Endothelial cell of umbilical vein (primary cell): ENCODE measurements at regions of chr15 and their contacts with region 1.

Region 1: DNA sequence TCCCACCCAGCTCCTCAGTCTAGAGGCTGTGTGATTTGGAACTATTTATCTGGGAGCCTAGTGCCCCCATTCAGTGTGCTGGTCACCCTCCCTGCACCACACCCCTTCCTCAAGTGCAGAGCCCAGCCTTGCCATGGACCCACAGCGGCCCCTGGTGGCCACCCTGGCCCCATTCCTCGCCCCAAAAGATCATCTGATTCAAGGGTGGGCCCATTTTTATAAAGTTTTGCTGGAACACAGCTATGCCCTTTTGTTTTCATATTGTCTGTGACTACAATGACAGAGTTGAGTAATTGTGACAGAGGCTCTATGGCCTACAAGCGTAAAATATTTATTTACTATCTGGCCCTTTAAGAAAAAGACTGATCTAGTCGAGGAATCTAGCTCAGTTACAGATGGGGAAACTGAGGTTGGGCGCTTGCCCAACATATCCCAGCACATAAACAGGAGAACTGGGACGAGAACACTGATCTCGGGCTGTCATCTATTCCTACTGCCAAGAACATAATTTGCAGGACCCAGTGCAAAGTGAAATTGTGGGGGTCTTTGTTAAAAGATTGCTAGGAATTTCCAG is 1.8 kb downstream of the FES start:
- DNase-seq: peak; percentile 72
- H3K4me3 ChIP-seq: peak overlapping the region in 1 of 3 experiments; percentile 46
- H3K27ac ChIP-seq: peak overlapping the region; percentile 4
- H3K4me1 ChIP-seq: peaks cover 24% of the 10 kb centered on the region
- H3K27me3 ChIP-seq: no peaks in the 10 kb centered on the region
- CTCF ChIP-seq: peak; percentile 96 to 98
- POLR2A ChIP-seq: no peak

Region 2: DNA sequence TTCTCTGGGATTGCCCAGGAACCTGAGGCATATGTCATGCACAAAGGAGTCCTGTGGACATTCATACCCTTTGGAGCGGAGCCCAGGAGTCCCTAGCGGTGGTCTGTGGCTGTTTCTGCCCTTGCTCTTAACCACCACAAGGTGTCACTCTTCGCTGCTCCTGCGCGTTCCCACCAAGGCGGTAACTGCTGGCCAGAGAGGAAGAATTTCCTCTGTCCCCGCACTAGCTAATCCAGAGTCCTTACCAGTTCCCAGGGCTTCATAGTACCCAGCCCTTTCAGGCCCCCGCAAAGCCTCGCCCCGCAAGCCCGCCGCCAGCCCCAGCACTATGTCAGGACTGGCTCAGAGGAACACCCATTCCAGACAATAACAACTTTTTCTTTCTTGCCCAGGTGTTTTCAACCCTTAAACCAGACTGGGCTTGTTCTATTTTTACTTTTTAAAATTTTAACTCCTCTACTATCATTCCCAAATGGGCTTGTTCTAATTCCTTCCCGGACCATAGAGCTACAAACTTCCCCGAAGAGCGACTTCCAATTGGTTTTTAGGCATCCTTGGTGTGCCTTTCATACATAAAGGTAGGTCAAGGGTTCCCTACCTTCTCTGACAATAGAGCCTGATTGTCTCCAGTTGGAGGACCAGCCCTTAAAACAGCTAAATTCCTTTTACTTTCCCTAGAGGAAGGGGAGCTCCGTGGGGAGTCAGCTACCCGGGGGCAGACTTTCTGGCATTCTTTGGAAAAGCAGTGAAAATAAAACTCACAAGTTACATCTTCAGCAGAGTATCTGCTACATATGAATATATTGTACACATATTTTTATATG is 565.9 kb before region 1 on chr15:
- CTCF ChIA-PET with region 1: interaction called, 22 read pairs
- POLR2A ChIA-PET with region 1: no interaction called
- dilution Hi-C with region 1: no loop called
- intact Hi-C with region 1: loop called (anchors 1 kb)
- DNase-seq: peak; percentile 91
- H3K4me3 ChIP-seq: no peak overlapping the region
- H3K27ac ChIP-seq: no peak overlapping the region
- H3K4me1 ChIP-seq: peaks cover 3% of the 10 kb centered on the region
- H3K27me3 ChIP-seq: no peaks in the 10 kb centered on the region
- CTCF ChIP-seq: peak; percentile 97 to 98
- POLR2A ChIP-seq: no peak

Region 3: DNA sequence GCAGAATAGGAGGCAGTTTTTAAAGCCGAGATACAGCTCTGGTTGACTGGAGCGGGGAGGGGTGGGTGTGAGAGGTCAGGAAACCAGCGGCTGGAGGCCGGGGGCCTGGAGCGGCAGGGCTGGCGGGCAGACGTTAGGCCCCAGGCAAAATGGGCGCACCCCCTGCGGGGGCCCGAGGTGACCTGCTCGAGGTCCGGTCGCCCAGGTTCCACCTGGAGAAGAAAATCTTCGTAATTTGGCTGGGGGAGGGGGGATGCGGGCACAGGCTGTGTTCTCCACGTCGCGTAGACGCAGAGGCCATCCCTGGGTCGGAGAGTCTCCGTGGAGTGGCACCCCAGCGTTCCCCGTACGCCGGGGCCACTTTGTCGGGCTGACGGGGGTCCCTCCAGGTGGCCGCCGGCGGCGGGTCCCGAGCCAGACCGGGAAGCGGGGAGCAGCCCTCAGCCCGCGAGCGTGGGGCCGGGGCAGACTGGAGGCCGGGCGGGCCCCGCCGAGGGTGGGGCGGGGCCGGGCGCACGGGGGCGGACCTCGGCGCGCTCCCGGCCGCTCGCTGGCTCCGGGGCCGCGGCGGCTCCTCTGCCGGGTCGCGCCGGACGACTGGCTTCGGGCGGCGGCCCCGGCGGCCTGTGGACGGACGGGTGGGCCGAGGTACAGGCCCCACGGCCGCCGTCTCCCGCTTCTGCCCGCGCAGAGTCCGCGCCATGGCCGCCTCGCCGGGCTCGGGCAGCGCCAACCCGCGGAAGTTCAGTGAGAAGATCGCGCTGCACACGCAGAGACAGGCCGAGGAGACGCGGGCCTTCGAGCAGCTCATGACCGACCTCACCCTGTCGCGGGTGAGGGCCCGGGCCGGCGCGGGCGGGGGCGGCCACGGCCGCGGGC is 356.5 kb before region 1 on chr15 and contains the start of gene CRTC3:
- CTCF ChIA-PET with region 1: interaction called, 3 read pairs
- POLR2A ChIA-PET with region 1: no interaction called
- dilution Hi-C with region 1: no loop called
- intact Hi-C with region 1: loop called (anchors 10 kb)
- DNase-seq: peak; percentile 49
- H3K4me3 ChIP-seq: peak within 1 kb of the TSS; percentile 46 to 81 (median 65)
- H3K27ac ChIP-seq: peak within 1 kb of the TSS; percentile 50
- H3K4me1 ChIP-seq: peaks cover 9% of the 10 kb centered on the region
- H3K27me3 ChIP-seq: no peaks in the 10 kb centered on the region
- CTCF ChIP-seq: peak in 1 of 2 donors; percentile 11
- POLR2A ChIP-seq: peak; percentile 74
- total RNA-seq, gene CRTC3: 25.9 and 26.4 TPM in 2 replicates

Region 4: DNA sequence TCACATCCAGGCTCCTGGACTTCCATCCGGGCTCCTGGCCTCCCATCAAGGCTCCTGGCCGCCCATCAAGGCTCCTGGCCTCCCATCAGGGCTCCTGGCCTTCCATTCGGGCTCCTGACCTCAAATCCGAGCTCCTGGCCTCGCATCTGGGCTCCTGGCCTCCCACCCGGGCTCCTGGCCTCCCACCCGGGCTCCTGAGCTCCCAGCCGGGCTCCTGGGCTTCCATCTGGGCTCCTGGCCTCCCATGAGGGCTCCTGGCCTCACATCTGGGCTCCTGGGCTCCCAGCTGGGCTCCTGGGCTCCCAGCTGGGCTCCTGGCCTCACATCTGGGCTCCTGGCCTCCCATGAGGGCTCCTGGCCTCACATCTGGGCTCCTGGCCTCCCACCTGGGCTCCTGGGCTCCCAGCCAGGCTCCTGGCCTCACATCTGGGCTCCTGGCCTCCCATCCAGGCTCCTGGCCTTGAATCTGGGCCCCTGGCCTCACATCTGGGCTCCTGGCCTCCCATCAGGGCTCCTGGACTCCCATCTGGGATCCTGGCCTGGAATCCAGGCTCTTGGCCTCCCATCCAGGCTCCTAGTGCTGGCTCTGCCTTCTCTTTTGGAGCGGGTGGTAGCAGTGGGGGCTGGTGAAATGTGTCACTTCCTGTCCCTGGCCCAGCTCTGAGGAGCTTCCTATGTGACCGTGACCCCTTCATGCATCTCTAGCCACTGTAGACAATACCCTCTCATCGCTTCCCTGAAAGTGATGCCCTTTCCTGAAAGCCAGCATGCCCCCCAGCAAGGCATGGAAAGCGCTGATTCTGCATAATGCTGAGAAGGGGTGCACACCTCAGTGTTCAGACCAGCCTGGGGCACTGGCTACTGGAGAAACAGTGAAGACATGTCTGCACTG is 231.6 kb before region 1 on chr15:
- CTCF ChIA-PET with region 1: interaction called, 237 read pairs
- POLR2A ChIA-PET with region 1: no interaction called
- dilution Hi-C with region 1: no loop called
- intact Hi-C with region 1: no loop called
- DNase-seq: peak; percentile 21
- H3K4me3 ChIP-seq: no peak overlapping the region
- H3K27ac ChIP-seq: peak overlapping the region; percentile 79
- H3K4me1 ChIP-seq: peaks cover 29% of the 10 kb centered on the region
- H3K27me3 ChIP-seq: no peaks in the 10 kb centered on the region
- CTCF ChIP-seq: no peak
- POLR2A ChIP-seq: no peak

Region 5: DNA sequence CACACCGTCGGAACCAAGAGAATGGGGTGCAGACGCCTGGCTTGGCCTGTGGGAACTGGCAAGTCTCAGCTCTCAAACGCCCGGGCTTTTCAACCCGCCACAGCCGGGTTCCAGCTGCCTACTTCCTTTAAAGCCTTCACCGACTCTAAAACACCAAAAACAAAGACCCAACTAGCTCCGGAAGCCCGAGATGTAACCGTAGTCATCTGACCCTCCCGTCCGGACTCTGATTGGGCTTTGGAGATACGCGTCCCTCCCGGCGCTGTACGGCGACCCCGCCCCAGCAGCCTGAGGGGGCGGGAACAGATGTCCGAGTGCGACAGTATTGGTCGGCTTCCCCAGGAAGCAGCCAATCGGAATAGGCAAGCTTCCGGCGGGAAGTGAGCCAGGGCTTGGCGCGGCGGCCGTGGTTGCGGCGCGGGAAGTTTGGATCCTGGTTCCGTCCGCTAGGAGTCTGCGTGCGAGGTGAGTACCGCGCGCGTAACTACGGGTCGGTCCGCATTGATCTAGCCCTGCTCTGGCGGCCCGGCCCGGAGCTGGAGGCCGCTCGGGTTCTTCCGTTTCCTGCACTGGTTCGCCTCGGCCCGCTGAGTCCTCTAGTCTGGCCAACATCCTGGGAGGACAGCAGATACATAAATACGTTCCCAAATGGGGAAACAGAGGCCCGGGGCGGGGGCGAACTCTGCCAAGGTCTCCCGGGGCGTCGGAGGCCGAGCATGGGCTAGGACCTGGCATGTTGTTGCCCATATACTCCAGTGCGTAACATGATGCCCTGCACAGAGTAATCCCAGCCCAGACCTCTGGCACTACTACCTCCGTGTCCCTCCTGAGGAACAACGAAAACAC is 168.9 kb before region 1 on chr15 and contains the start of gene BLM:
- CTCF ChIA-PET with region 1: interaction called, 29 read pairs
- POLR2A ChIA-PET with region 1: no interaction called
- dilution Hi-C with region 1: no loop called
- intact Hi-C with region 1: loop called (anchors 1 kb)
- DNase-seq: peak; percentile 99
- H3K4me3 ChIP-seq: peak within 1 kb of the TSS; percentile 63 to 93 (median 79)
- H3K27ac ChIP-seq: peak within 1 kb of the TSS; percentile 90
- H3K4me1 ChIP-seq: peaks cover 15% of the 10 kb centered on the region
- H3K27me3 ChIP-seq: no peaks in the 10 kb centered on the region
- CTCF ChIP-seq: peak in 1 of 2 donors; percentile 34
- POLR2A ChIP-seq: peak; percentile 90
- total RNA-seq, gene BLM: 17.3 and 18.6 TPM in 2 replicates

Region 6: GRCh38 chr15:90757461-90757860 is 128.7 kb before region 1 on chr15:
- CTCF ChIA-PET with region 1: no interaction called
- POLR2A ChIA-PET with region 1: no interaction called
- dilution Hi-C with region 1: no loop called
- intact Hi-C with region 1: no loop called
- DNase-seq: no peak
- H3K4me3 ChIP-seq: no peak overlapping the region
- H3K27ac ChIP-seq: no peak overlapping the region
- H3K4me1 ChIP-seq: peaks cover 5% of the 10 kb centered on the region
- H3K27me3 ChIP-seq: no peaks in the 10 kb centered on the region
- CTCF ChIP-seq: no peak
- POLR2A ChIP-seq: no peak

Region 7: DNA sequence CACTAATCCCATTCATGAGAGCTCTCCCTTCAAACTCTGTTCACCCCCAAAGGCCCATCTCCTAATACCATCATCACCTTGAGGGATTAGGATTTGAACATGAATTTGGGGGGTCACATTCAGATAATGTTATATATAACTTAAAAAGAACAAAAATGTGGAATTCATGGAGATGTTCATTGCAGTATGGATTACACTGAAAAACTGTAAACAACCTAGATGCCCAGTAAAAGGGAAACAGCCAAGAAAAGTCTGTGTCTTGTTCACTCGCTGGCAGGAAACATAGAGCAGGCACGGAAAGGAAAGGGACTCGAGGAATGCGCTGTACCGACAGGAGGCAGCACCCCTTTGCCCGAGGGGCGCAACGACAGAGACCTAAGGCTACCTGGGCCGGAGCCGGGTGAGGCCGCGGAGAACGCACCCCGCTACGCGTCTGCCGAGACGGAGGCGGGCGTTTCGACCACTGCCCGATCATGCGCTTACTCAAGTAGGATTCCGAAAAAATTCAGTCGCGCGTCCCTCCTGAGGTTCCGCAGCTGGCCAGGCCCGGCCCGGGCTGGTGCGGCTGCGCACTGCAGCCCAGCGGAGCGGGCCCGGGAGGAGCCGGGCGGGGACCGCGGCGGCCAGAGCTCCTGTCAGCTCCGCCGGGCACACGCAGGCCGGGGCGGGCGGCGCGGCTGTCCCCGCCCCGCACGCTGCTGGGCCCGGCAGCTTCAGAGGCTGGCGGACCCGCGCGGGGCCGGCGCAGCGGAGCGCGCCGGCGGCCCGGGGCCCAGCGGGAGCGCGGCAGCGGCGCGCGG is 16.1 kb after region 1 on chr15:
- CTCF ChIA-PET with region 1: interaction called, 18 read pairs
- POLR2A ChIA-PET with region 1: no interaction called
- dilution Hi-C with region 1: no loop called
- intact Hi-C with region 1: no loop called
- DNase-seq: peak; percentile 88
- H3K4me3 ChIP-seq: peak overlapping the region; percentile 53 to 79 (median 63)
- H3K27ac ChIP-seq: peak overlapping the region; percentile 51
- H3K4me1 ChIP-seq: peaks cover 17% of the 10 kb centered on the region
- H3K27me3 ChIP-seq: no peaks in the 10 kb centered on the region
- CTCF ChIP-seq: peak; percentile 66 to 77
- POLR2A ChIP-seq: peak; percentile 78

Region 8: GRCh38 chr15:90970274-90970673 is 84.1 kb after region 1 on chr15:
- CTCF ChIA-PET with region 1: no interaction called
- POLR2A ChIA-PET with region 1: no interaction called
- dilution Hi-C with region 1: no loop called
- intact Hi-C with region 1: no loop called
- DNase-seq: no peak
- H3K4me3 ChIP-seq: no peak overlapping the region
- H3K27ac ChIP-seq: no peak overlapping the region
- H3K4me1 ChIP-seq: no peaks in the 10 kb centered on the region
- H3K27me3 ChIP-seq: no peaks in the 10 kb centered on the region
- CTCF ChIP-seq: no peak
- POLR2A ChIP-seq: no peak

Region 9: GRCh38 chr15:90986807-90987507 is 100.8 kb after region 1 on chr15:
- CTCF ChIA-PET with region 1: no interaction called
- POLR2A ChIA-PET with region 1: no interaction called
- dilution Hi-C with region 1: no loop called
- intact Hi-C with region 1: no loop called
- DNase-seq: no peak
- H3K4me3 ChIP-seq: no peak overlapping the region
- H3K27ac ChIP-seq: no peak overlapping the region
- H3K4me1 ChIP-seq: peaks cover 17% of the 10 kb centered on the region
- H3K27me3 ChIP-seq: no peaks in the 10 kb centered on the region
- CTCF ChIP-seq: no peak
- POLR2A ChIP-seq: no peak

Region 10: GRCh38 chr15:92521624-92522008 is 1635.5 kb after region 1 on chr15:
- CTCF ChIA-PET with region 1: no interaction called
- POLR2A ChIA-PET with region 1: no interaction called
- dilution Hi-C with region 1: no loop called
- intact Hi-C with region 1: no loop called
- DNase-seq: peak; percentile 89
- H3K4me3 ChIP-seq: no peak overlapping the region
- H3K27ac ChIP-seq: no peak overlapping the region
- H3K4me1 ChIP-seq: peaks cover 6% of the 10 kb centered on the region
- H3K27me3 ChIP-seq: no peaks in the 10 kb centered on the region
- CTCF ChIP-seq: peak; percentile 72
- POLR2A ChIP-seq: no peak